CD8-positive, alpha-beta T cell (primary cell): ENCODE measurements at regions of chr9 and their contacts with region 1.

Region 1: GRCh38 chr9:96398582-96399324 is 15.2 kb upstream of the SLC35D2 start:
- DNase-seq: peak in 8 of 9 experiments; percentile 8 to 68 (median 42)
- ATAC-seq: peak; percentile 82
- H3K4me3 ChIP-seq: no peak overlapping the region
- H3K4me3 Mint-ChIP-seq: peak overlapping the region; percentile 61
- H3K27ac ChIP-seq: peak overlapping the region; percentile 36 to 63
- H3K27ac Mint-ChIP-seq: peak overlapping the region; percentile 91
- H3K4me1 ChIP-seq: peaks cover 22% of the 10 kb centered on the region
- H3K4me1 Mint-ChIP-seq: peaks cover 36% of the 10 kb centered on the region
- H3K27me3 ChIP-seq: no peaks in the 10 kb centered on the region
- H3K27me3 Mint-ChIP-seq: no peaks in the 10 kb centered on the region
- CTCF ChIP-seq: no peak

Region 2: GRCh38 chr9:96383165-96383942 is 15.4 kb before region 1 on chr9 and contains the start of gene SLC35D2:
- CTCF ChIA-PET with region 1: interaction called, 5 read pairs
- POLR2A ChIA-PET with region 1: interaction called, 11 read pairs
- intact Hi-C with region 1: loop called in 1 of 2 experiments (anchors 2 kb)
- DNase-seq: peak in 7 of 9 experiments; percentile 1 to 62 (median 15)
- ATAC-seq: peak; percentile 63
- H3K4me3 ChIP-seq: peak within 1 kb of the TSS; percentile 54 to 60
- H3K4me3 Mint-ChIP-seq: peak within 1 kb of the TSS; percentile 90
- H3K27ac ChIP-seq: peak within 1 kb of the TSS in 1 of 2 experiments; percentile 43
- H3K27ac Mint-ChIP-seq: peak within 1 kb of the TSS; percentile 85
- H3K4me1 ChIP-seq: peaks cover 18% of the 10 kb centered on the region
- H3K4me1 Mint-ChIP-seq: peaks cover 36% of the 10 kb centered on the region
- H3K27me3 ChIP-seq: no peaks in the 10 kb centered on the region
- H3K27me3 Mint-ChIP-seq: no peaks in the 10 kb centered on the region
- CTCF ChIP-seq: no peak
- total RNA-seq, gene SLC35D2: 18.5 to 20.5 TPM